ENCODE measurements at regions of chr17 and their contacts with region 1.

Region 1: DNA sequence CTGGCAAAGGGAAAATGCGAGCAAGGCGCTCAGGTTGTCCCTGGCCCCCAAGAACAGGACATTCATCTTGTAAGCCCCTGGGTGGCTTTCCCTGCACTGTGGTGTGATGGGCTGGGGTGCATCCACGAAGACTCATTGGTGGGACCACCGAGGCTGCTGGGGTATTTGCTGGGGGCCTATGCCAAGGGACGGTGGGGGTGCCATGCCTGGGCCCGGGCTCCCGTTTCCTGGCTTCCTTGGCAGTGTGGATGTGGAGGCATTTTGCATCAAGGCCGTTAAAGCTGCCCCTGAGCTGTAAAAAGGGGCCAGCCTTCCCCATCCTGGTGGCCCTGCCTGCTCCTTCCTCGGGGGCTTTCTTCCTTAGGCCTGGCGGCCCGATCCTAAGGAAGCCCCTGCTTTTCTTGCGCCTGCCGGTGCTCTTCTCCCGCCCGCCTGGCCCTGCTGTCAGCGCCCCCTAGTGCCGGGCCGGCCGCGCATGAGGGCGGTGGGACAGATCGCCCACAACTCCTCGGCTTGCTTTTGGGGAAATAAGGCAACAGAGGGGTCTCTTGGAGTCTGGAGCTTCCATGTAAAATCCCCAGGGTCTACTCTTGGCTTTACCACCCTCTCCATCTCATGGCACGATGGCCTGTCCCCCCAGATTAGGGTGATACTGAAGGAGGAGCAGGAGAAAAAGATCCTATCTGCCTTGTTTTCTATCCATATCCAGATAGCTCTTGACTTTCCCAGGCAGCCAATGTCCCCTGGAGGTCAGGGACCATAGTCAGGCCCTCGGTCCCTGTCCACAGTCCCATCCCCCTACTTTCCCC is 9.8 kb upstream of the TBX2 start:
- DNase-seq: peak in 1 of 2 experiments; percentile 92
- H3K4me3 ChIP-seq: no peak overlapping the region
- H3K27ac ChIP-seq: no peak overlapping the region
- H3K4me1 ChIP-seq: peaks cover 0 to 3% (median 1%) of the 10 kb centered on the region in 4 experiments; a peak in 3 of 7 replicates
- H3K27me3 ChIP-seq: peaks cover 10 to 24% (median 21%) of the 10 kb centered on the region in 4 experiments
- CTCF ChIP-seq: peak; percentile 90 to 93 (median 92)
- EP300 ChIP-seq: no peak
- POLR2A ChIP-seq: no peak
- RAD21 ChIP-seq: peak; percentile 87 to 92

Region 2: GRCh38 chr17:60971515-60972369 is 418.1 kb before region 1 on chr17:
- CTCF ChIA-PET with region 1: interaction called, 22 read pairs
- POLR2A ChIA-PET with region 1: no interaction called
- DNase-seq: peak; percentile 5 to 49
- H3K4me3 ChIP-seq: no peak overlapping the region
- H3K27ac ChIP-seq: no peak overlapping the region
- H3K4me1 ChIP-seq: no peaks in the 10 kb centered on the region; a peak in 1 of 7 replicates
- H3K27me3 ChIP-seq: no peaks in the 10 kb centered on the region
- CTCF ChIP-seq: peak in 2 of 3 experiments; percentile 73 to 80; a peak in 3 of 4 replicates
- EP300 ChIP-seq: no peak
- POLR2A ChIP-seq: no peak
- RAD21 ChIP-seq: peak; percentile 86 to 87

Region 3: DNA sequence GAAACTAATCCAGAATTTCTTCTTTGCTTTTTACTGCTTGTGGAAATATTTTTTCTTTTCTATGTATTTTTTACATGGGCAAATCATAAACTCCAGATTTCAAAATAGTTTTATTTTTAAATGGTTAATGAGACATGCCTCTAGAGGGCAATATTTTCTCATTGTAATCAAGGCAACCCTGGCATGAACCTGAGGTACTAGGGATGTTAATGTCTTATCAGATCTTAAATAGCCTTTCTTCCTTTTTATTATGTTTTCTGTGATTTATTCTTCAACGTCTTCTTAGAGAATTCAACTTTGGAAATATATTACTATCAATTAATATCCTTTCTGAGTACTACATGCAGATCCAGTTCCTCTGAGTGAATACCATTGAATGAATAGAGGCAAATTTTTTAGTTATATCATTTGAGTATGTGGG is 387.5 kb before region 1 on chr17:
- CTCF ChIA-PET with region 1: interaction called, 11 read pairs
- POLR2A ChIA-PET with region 1: no interaction called
- DNase-seq: no peak
- H3K4me3 ChIP-seq: no peak overlapping the region
- H3K27ac ChIP-seq: no peak overlapping the region
- H3K4me1 ChIP-seq: 0 out of 7 replicates have a peak, but pooled peaks cover 0 to 2% (median 0%) of the 10 kb centered on the region in 4 experiments
- H3K27me3 ChIP-seq: no peaks in the 10 kb centered on the region
- CTCF ChIP-seq: peak in 2 of 3 experiments; percentile 13 to 28; a peak in 2 of 4 replicates
- EP300 ChIP-seq: no peak
- POLR2A ChIP-seq: no peak
- RAD21 ChIP-seq: peak; percentile 62 to 67

Region 4: DNA sequence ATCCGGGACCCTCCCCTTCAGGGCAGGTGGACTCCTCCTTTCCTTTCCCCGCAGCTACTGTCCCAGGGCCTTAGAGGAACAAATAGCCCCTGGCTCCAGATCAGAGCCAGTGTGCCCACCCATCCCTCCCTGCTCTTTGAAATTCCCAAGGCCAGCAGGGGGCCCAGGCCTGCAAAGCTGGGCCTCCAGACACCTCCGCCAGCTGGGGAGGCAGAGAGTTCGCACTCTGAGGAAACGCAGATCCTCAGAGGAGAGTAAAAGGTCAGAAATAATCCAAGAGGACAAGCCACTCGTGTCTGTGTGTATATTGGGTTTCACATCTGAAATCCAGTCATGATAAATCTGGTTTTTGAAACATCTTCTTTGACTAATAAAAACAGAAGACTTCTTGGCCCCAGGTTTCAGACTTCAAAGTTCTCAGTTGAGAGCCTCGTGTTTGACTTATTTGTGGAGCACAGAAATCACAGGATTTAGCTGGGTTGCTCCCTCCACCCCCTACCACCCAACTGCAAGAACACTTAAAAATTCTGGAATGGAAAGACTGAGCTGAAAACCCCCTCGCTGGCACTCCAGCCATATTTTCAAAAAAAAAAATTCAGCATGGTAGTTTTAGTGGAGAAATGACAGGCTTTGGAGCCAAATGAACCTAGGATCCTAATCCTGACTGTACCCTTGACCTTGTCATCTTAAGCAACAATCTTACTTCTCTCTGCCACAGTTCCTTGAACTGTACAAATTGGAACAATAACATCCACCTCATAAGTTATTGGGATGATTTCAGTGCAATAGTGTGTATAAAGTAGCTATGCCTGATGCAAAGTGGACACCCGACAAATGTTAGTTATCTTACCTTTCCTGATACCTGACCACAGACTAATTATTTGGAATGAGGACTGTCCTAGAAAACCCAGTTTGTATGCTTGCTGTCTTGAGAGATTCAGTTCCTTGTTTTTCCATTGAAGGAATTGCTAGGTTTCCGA is 34.7 kb before region 1 on chr17:
- CTCF ChIA-PET with region 1: interaction called, 11 read pairs
- POLR2A ChIA-PET with region 1: interaction called, 3 read pairs
- DNase-seq: no peak
- H3K4me3 ChIP-seq: no peak overlapping the region
- H3K27ac ChIP-seq: no peak overlapping the region
- H3K4me1 ChIP-seq: peaks cover 0 to 14% (median 9%) of the 10 kb centered on the region in 4 experiments; a peak in 4 of 7 replicates
- H3K27me3 ChIP-seq: no peaks in the 10 kb centered on the region
- CTCF ChIP-seq: no peak; a peak in 1 of 4 replicates
- EP300 ChIP-seq: no peak
- POLR2A ChIP-seq: no peak
- RAD21 ChIP-seq: no peak

Measured in H1 (cell line).